MCF 10A (cell line): ENCODE measurements at regions of chr2 and their contacts with region 1.

Region 1: DNA sequence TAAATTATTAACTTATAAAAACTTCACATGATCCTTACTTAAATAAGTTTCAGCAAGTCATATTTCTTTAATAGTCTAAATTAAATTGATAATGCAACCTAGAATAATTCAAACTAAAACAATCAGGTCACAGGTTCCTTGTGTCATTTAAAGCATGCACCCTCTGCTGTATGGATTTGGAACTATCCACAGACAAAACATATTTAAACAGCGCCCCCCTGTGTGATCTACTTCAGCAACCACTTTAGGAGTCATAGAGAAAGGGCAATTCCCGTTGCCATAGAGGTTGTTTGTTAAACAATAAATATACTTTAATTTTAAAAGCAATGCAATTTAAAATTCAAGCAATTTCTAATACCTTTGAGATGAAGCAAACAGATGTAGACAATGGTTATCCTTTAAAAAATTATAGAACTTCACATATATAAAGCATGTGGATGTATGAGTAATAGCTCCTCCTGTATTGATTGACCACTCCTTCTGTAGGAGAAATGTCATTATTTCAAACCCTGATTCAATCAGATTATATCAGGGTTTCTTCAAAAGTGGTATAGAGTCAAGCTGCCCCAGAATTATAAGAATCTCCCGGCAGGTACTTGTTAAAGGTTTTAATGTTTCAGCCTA is 21.2 kb downstream of the GRB14 start:
- DNase-seq: peak; percentile 81
- H3K4me3 Mint-ChIP-seq: no peak overlapping the region
- H3K27ac Mint-ChIP-seq: no peak overlapping the region
- H3K4me1 Mint-ChIP-seq: peaks cover 13% of the 10 kb centered on the region
- H3K27me3 Mint-ChIP-seq: no peaks in the 10 kb centered on the region
- CTCF ChIP-seq: peak; percentile 83

Region 2: DNA sequence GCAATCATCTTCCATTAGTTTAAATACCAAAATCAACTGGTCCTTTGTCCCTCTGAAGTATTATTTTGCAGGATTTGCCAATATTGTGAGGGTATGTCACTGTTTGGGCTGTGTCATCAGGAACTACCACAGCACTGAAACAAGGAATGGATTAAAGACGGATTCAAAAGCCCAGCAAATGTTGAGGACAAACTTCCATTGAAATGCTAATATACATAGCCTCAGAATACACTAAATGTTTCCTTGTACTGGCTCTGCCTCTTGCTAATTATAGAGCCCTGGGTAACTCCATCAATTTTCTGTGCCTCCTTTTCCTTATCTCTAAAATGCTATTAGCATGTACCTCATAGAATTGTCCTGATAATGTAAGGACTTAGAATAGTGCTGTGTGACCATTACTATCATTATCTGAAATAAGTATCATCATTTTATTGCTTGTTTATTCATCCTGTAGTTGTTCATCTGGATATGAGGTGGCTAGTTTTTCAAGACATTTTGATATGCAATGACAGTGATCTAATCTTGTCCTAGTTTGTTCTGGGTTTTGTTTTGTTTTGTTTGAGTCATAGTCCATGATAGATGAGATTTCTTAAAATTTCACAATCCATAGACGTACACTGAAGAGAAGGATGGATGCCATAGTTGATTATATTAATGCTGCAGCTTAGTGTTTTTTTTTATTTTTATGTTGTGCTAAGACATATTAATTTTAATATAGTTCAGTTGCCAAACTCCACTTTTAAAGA is 1428.1 kb before region 1 on chr2:
- CTCF ChIA-PET with region 1: interaction called, 5 read pairs
- POLR2A ChIA-PET with region 1: no interaction called
- intact Hi-C with region 1: loop called (anchors 5 kb)
- DNase-seq: peak; percentile 51
- H3K4me3 Mint-ChIP-seq: no peak overlapping the region
- H3K27ac Mint-ChIP-seq: peak overlapping the region; percentile 57
- H3K4me1 Mint-ChIP-seq: peaks cover 14% of the 10 kb centered on the region
- H3K27me3 Mint-ChIP-seq: no peaks in the 10 kb centered on the region
- CTCF ChIP-seq: no peak